ENCODE measurements at regions of chr17 and their contacts with region 1.

Region 1: DNA sequence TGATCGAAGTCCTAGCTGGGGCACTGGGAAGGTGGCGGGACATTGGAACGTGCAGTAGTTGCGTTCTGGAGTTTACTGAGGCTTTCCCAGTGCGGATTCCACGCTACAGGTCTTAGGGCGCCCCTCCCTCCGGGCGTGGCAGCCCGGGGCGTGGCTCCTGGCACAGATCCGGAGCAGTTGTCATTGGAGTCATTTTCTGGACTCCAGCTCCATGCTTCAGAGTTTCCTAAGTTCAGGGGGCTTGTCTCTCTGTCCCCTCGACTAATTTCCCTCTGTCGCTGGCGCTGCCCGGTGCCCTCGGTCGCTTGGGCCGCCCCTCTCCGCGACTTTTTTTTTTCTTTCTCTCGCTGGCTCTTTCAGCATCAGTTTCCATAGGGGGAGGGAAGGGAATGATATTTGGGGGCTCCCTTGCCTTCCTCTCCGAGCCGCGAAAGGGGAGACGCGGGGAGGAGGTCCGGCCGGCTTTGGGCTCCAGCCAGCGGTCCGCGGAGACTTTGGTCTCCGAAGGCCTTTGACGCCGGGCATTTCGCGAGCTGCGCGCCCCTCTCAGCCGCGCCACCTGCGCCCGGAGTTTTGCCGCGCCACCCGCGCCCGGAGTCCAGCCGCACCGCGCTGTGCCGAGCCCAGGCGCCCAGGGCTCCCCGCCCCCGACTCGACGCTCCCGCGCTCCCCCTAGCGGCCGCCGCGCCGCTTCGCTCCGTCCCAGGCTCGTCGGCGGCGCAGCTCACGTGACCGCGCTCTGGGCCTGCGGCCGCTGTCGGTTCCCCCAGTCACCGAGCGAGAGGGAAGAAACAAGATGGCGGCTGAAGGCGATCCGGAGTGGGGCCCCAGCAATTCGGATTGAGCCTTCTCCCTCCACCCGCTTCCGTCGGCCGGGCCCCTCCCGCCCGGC is at the start of gene BPTF:
- DNase-seq: peak; percentile 98
- H3K4me3 Mint-ChIP-seq: peak within 1 kb of the TSS; percentile 95
- H3K27ac Mint-ChIP-seq: peak within 1 kb of the TSS; percentile 96
- H3K4me1 Mint-ChIP-seq: peaks cover 29% of the 10 kb centered on the region
- H3K27me3 Mint-ChIP-seq: peaks cover 14% of the 10 kb centered on the region
- total RNA-seq, gene BPTF: 74.5 and 77.1 TPM in 2 replicates

Region 2: GRCh38 chr17:67366193-67367157 is 458.5 kb before region 1 on chr17 and contains the start of gene PSMD12:
- intact Hi-C with region 1: loop called (anchors 5 kb)
- DNase-seq: peak; percentile 98
- H3K4me3 Mint-ChIP-seq: peak within 1 kb of the TSS; percentile 97
- H3K27ac Mint-ChIP-seq: peak within 1 kb of the TSS; percentile 93
- H3K4me1 Mint-ChIP-seq: peaks cover 41% of the 10 kb centered on the region
- H3K27me3 Mint-ChIP-seq: no peaks in the 10 kb centered on the region
- total RNA-seq, gene PSMD12: 92.3 and 93.6 TPM in 2 replicates

Region 3: GRCh38 chr17:67717624-67718329 is 107.2 kb before region 1 on chr17 and contains the start of gene NOL11:
- intact Hi-C with region 1: loop called (anchors 1 kb)
- DNase-seq: peak; percentile 100
- H3K4me3 Mint-ChIP-seq: peak within 1 kb of the TSS; percentile 90
- H3K27ac Mint-ChIP-seq: peak within 1 kb of the TSS; percentile 96
- H3K4me1 Mint-ChIP-seq: peaks cover 16% of the 10 kb centered on the region
- H3K27me3 Mint-ChIP-seq: peaks cover 4% of the 10 kb centered on the region
- total RNA-seq, gene NOL11: 110 and 118 TPM in 2 replicates

Region 4: GRCh38 chr17:67862614-67863217 is 37.7 kb after region 1 on chr17:
- intact Hi-C with region 1: loop called (anchors 5 kb)
- DNase-seq: no peak
- H3K4me3 Mint-ChIP-seq: no peak overlapping the region
- H3K27ac Mint-ChIP-seq: peak overlapping the region; percentile 88
- H3K4me1 Mint-ChIP-seq: peaks cover 39% of the 10 kb centered on the region
- H3K27me3 Mint-ChIP-seq: no peaks in the 10 kb centered on the region

Region 5: DNA sequence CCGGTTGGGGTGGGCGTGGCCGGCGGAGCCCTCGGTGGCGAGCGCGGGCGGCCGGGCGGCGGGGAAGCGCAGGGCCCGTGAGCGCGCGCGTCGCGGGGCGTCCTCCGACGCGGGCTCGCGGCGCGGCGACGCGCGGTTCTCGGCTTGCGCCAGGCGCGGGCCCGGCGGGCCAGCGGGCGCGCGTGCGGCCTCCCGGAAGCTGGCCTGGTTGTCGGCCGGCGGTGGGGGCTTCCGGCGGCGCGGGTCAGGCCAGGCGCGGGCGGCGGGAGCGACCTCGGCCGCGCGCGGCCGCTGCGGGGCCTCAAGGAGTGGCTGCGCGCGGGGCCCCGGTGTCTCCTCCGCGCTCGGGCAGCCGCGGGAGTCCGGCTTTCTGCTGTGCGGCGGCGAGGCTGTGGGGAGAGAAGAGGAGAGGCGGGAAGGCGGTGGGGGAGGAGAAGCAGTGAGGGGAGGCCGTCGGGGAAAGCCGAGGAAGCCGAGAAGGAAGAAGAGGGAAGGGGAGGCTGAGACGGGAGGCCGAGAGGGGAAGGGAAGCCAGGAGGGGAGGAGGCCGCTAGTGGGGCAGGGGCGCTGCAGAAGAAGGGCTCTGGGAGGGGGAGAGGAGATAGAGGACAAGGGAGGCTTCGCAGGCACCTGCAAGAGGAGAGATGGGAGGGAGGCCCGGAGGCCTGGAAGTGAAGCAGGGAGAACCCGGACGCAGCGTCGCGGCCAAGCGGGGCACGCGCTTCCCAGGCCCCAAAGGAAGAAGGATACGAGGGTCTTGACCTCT is 168.8 kb after region 1 on chr17:
- intact Hi-C with region 1: loop called (anchors 10 kb)
- DNase-seq: peak; percentile 92
- H3K4me3 Mint-ChIP-seq: peak overlapping the region; percentile 82
- H3K27ac Mint-ChIP-seq: peak overlapping the region; percentile 89
- H3K4me1 Mint-ChIP-seq: peaks cover 35% of the 10 kb centered on the region
- H3K27me3 Mint-ChIP-seq: peaks cover 28% of the 10 kb centered on the region

Region 6: DNA sequence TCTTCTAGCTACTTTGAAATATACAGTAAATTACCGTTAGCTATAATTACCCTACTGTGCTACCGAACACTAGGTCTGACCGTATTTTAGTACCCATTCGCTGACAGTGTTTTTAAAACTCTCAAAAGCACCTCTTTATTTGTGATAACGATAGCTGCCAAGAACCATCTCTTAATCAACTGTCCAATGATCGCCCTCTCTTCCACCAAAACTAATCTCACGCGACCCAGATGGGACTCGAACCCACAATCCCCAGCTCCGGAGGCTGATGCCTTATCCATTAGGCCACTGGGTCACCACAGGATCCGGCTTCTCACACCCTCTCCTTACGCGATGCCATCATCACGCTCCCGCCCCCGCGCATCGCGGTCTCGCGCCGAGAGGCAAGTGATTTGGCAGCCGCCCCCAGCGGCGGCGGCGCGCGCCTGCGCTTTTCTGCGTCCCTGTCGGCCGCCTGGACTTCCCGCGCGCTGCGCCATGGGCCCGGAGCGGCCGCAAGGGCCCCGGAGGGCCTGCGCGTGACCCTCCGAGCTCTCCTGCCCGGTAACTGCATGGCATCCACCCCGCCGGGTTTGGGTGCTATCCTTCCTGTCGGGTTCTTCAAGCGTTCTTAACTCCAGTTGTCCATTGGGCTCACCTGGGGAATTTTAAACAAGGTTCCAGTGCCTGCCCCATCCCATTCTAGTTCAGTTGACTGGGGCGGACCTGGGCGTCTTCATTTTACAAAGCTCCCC is 194.9 kb after region 1 on chr17:
- intact Hi-C with region 1: loop called (anchors 5 kb)
- DNase-seq: peak; percentile 99
- H3K4me3 Mint-ChIP-seq: peak overlapping the region; percentile 82
- H3K27ac Mint-ChIP-seq: peak overlapping the region; percentile 90
- H3K4me1 Mint-ChIP-seq: peaks cover 14% of the 10 kb centered on the region
- H3K27me3 Mint-ChIP-seq: peaks cover 9% of the 10 kb centered on the region